ENCODE measurements at regions of chr5 and their contacts with region 1.

Region 1: GRCh38 chr5:126656396-126657007 is 55.8 kb downstream of the PHAX start:
- DNase-seq: no peak
- ATAC-seq: no peak
- H3K4me3 ChIP-seq: no peak overlapping the region
- H3K27ac ChIP-seq: no peak overlapping the region
- H3K4me1 ChIP-seq: no peaks in the 10 kb centered on the region
- H3K27me3 ChIP-seq: peaks cover 0 to 7% (median 0%) of the 10 kb centered on the region in 7 donors
- CTCF ChIP-seq: peak; percentile 45 to 83 (median 75)

Region 2: GRCh38 chr5:126519634-126520592 is 136.6 kb before region 1 on chr5:
- intact Hi-C with region 1: no loop called
- DNase-seq: no peak
- ATAC-seq: peak in 5 of 8 donors; percentile 47 to 62 (median 54)
- H3K4me3 ChIP-seq: peak overlapping the region in 1 of 10 donors; percentile 6
- H3K27ac ChIP-seq: peak overlapping the region; percentile 5 to 79 (median 46)
- H3K4me1 ChIP-seq: peaks cover 3 to 35% (median 21%) of the 10 kb centered on the region in 9 donors
- H3K27me3 ChIP-seq: no peaks in the 10 kb centered on the region
- CTCF ChIP-seq: no peak

Region 3: GRCh38 chr5:126776497-126777256 is 120.2 kb after region 1 on chr5 and contains the start of gene LMNB1:
- intact Hi-C with region 1: loop called in 3 of 10 experiments (anchors 5 kb)
- DNase-seq: peak; percentile 93 to 94
- ATAC-seq: peak; percentile 94 to 97 (median 96)
- H3K4me3 ChIP-seq: peak within 1 kb of the TSS; percentile 53 to 90 (median 74)
- H3K27ac ChIP-seq: peak within 1 kb of the TSS; percentile 36 to 92 (median 84)
- H3K4me1 ChIP-seq: peaks cover 0 to 36% (median 17%) of the 10 kb centered on the region in 9 donors
- H3K27me3 ChIP-seq: no peaks in the 10 kb centered on the region
- CTCF ChIP-seq: peak in 2 of 9 donors; percentile 13 to 17
- total RNA-seq, gene LMNB1: 0.78 to 14.7 (median 1.4) TPM

Region 4: GRCh38 chr5:126899476-126899875 is 243.0 kb after region 1 on chr5:
- intact Hi-C with region 1: no loop called
- DNase-seq: no peak
- ATAC-seq: no peak
- H3K4me3 ChIP-seq: no peak overlapping the region
- H3K27ac ChIP-seq: no peak overlapping the region
- H3K4me1 ChIP-seq: no peaks in the 10 kb centered on the region
- H3K27me3 ChIP-seq: no peaks in the 10 kb centered on the region
- CTCF ChIP-seq: no peak

Region 5: GRCh38 chr5:126909856-126910255 is 253.4 kb after region 1 on chr5:
- intact Hi-C with region 1: no loop called
- DNase-seq: no peak
- ATAC-seq: no peak
- H3K4me3 ChIP-seq: no peak overlapping the region
- H3K27ac ChIP-seq: no peak overlapping the region
- H3K4me1 ChIP-seq: peaks cover 0 to 5% (median 0%) of the 10 kb centered on the region in 9 donors
- H3K27me3 ChIP-seq: no peaks in the 10 kb centered on the region
- CTCF ChIP-seq: no peak

Region 6: DNA sequence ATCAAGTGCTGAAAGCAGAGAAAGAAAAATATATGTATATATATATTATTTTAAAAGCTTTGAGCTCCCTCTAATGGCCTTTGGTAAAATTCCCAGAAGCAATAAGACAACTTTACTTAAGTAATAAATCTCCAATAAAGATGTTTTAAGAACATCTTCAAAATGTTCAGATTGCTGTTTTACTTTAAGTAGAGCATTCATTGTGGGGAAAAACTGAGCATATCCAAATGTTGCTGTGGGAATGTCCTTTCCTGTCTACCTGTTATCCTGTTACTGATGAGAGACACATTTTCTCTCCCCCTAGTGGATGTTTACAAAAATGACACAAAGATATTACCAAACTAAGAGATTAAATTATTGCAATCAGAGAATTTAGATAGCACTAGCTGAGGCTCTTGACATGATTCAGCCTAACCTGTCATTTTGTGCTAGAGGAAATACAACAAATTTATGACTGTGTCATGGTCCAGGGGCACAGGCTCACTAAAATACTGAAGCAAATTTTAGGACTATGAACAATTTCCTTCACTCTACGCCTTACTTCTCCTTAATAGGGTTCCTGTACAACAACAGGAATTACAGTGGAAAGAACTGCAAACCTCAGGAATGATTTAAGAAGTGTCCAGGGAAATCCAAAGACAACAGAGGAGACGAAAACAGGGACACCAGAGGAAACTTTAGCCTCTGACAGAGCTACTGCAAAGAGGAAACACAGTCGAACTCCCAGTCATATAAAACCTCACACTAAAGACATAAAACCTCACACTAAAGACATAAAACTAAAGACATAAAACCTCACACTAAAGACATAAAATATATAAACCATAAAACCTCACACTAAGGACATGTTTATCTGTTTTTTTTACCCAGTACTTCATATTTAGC is 836.6 kb after region 1 on chr5:
- intact Hi-C with region 1: loop called in 1 of 10 experiments (anchors 10 kb)
- DNase-seq: no peak
- ATAC-seq: peak in 1 of 8 donors; percentile 35
- H3K4me3 ChIP-seq: no peak overlapping the region
- H3K27ac ChIP-seq: no peak overlapping the region
- H3K4me1 ChIP-seq: no peaks in the 10 kb centered on the region
- H3K27me3 ChIP-seq: peaks cover 0 to 41% (median 9%) of the 10 kb centered on the region in 7 donors
- CTCF ChIP-seq: peak; percentile 39 to 79 (median 70)

Measured in heart right ventricle (tissue), 16 donors.